ENCODE measurements at regions of chr1 and their contacts with region 1.

Region 1: GRCh38 chr1:27010989-27011764 is 1.5 kb downstream of the TENT5B start:
- DNase-seq: peak; percentile 87 to 92
- H3K4me3 ChIP-seq: no peak overlapping the region
- H3K27ac ChIP-seq: peak overlapping the region; percentile 79
- H3K4me1 ChIP-seq: peaks cover 53% of the 10 kb centered on the region
- H3K27me3 ChIP-seq: no peaks in the 10 kb centered on the region
- CTCF ChIP-seq: no peak

Region 2: GRCh38 chr1:26838474-26839338 is 172.5 kb before region 1 on chr1:
- CTCF ChIA-PET with region 1: no interaction called
- POLR2A ChIA-PET with region 1: no interaction called
- intact Hi-C with region 1: no loop called
- DNase-seq: no peak
- H3K4me3 ChIP-seq: no peak overlapping the region
- H3K27ac ChIP-seq: no peak overlapping the region
- H3K4me1 ChIP-seq: no peaks in the 10 kb centered on the region
- H3K27me3 ChIP-seq: no peaks in the 10 kb centered on the region
- CTCF ChIP-seq: no peak

Region 3: DNA sequence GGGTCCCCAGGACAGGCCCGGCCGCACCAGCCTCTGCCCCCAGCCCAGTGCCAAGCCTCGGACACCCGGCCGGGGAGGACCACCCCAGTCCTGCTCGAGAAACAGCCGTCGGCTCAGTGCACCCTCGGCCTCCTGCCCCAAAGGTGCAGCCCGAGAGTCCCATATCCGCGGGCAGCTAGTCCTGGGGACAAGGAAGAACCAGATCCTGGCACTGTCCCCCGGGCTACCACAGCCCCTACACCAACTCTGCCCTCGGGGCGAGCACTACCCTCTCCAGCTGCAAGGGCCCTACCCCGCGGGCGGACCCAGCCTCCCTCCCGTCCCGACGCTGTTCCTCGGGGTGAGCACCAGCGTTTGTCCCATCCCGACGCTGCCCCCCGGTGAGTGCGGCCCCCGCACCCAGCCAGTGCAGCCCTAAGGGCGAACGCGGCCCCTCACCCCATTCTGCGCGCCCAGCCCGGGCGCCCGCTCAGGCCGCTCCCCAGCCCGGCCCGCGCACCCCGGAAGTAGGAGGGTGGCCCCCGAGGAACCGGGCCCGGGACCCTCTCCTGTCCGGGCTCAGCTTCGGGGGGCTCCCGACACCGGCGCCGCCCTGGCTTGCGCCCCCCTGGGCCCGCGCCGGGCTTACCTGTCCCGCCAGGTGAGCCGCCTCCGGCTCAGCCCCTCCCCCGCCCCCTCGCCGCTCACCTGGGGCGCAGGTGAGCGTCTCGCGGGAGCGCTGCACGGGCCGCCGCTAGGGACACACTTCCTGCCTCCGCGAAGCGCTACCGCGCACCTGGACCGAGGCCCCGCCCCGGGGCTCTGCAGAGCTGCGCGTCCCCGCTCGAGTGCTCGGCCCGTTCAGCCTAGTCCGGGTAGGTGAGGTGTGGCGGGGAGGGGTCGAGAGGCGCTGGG is 51.2 kb before region 1 on chr1 and contains the start of gene KDF1:
- CTCF ChIA-PET with region 1: no interaction called
- POLR2A ChIA-PET with region 1: interaction called, 31 read pairs
- intact Hi-C with region 1: no loop called
- DNase-seq: peak; percentile 68 to 88
- H3K4me3 ChIP-seq: peak within 1 kb of the TSS; percentile 81
- H3K27ac ChIP-seq: peak within 1 kb of the TSS; percentile 23; the same call in 1 of the 2 replicates
- H3K4me1 ChIP-seq: peaks cover 19% of the 10 kb centered on the region
- H3K27me3 ChIP-seq: no peaks in the 10 kb centered on the region
- CTCF ChIP-seq: no peak; the same call in 1 of the 2 replicates
- total RNA-seq, gene KDF1: 20.5 and 21.3 TPM in 2 replicates

Region 4: DNA sequence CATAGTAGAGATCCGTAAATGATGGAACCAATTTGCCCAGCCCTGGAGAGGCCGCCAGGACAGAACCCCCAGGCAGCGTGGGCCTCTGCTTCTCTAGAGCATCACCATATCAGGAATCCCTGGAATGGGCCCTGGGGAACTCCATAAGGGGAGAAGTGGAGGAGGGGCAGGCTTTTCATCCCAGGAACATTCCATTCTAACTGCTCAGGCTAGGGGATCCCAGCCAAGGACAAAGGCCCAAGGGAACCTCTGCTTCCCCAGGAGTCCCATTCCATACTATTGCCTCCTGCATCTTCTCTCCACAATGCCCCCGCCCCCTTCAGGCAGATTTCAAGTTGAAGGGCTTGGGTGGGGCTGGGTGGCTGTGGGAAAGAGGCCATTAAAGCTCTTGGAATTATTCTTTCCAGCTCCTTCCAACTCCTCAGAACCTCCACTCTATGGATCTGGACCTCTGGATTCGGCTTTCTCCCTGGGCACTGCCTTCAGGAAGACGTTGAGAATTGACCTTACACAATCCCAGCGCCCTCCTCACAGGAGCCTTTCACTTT is 11.7 kb before region 1 on chr1:
- CTCF ChIA-PET with region 1: interaction called, 6 read pairs
- POLR2A ChIA-PET with region 1: interaction called, 3 read pairs
- intact Hi-C with region 1: loop called (anchors 1 kb)
- DNase-seq: peak; percentile 70 to 81
- H3K4me3 ChIP-seq: no peak overlapping the region
- H3K27ac ChIP-seq: peak overlapping the region; percentile 62
- H3K4me1 ChIP-seq: peaks cover 40% of the 10 kb centered on the region
- H3K27me3 ChIP-seq: no peaks in the 10 kb centered on the region
- CTCF ChIP-seq: no peak

Region 5: GRCh38 chr1:27031235-27032118 is 20.3 kb after region 1 on chr1:
- CTCF ChIA-PET with region 1: interaction called, 9 read pairs
- POLR2A ChIA-PET with region 1: interaction called, 12 read pairs
- intact Hi-C with region 1: loop called (anchors 1 kb)
- DNase-seq: peak; percentile 76 to 93
- H3K4me3 ChIP-seq: peak overlapping the region; percentile 59; the same call in 1 of the 2 replicates
- H3K27ac ChIP-seq: peak overlapping the region; percentile 81
- H3K4me1 ChIP-seq: peaks cover 5% of the 10 kb centered on the region; the same call in 1 of the 2 replicates
- H3K27me3 ChIP-seq: no peaks in the 10 kb centered on the region
- CTCF ChIP-seq: no peak

Region 6: DNA sequence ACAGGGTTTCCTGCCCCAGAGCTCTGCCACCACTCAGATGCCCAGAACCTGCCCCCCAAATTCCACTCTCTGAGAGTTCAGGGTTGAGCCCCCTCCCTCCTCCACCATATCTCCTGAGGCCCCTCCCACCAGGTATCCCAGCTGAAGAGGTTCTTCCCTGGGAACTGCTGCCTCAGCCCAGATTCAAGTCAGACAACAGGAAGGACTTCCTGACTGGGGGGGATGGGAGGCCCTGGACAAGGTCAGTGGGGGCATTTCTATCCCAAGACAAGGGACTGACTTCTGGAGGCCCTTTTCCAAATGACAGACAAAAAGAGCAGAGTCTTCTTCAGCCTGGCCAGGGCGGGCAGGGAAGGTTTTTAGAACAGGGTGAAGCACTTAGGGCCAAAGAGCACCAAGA is 25.5 kb after region 1 on chr1:
- CTCF ChIA-PET with region 1: interaction called, 5 read pairs
- POLR2A ChIA-PET with region 1: interaction called, 12 read pairs
- intact Hi-C with region 1: loop called (anchors 1 kb)
- DNase-seq: no peak
- H3K4me3 ChIP-seq: no peak overlapping the region
- H3K27ac ChIP-seq: no peak overlapping the region
- H3K4me1 ChIP-seq: peaks cover 5% of the 10 kb centered on the region; the same call in 1 of the 2 replicates
- H3K27me3 ChIP-seq: no peaks in the 10 kb centered on the region
- CTCF ChIP-seq: no peak

Region 7: GRCh38 chr1:27346991-27347627 is 335.9 kb after region 1 on chr1:
- CTCF ChIA-PET with region 1: interaction called, 11 read pairs
- POLR2A ChIA-PET with region 1: no interaction called
- intact Hi-C with region 1: no loop called
- DNase-seq: peak in 1 of 2 experiments; percentile 19
- H3K4me3 ChIP-seq: no peak overlapping the region
- H3K27ac ChIP-seq: no peak overlapping the region
- H3K4me1 ChIP-seq: peaks cover 11% of the 10 kb centered on the region
- H3K27me3 ChIP-seq: no peaks in the 10 kb centered on the region
- CTCF ChIP-seq: no peak

Measured in PC-9 (cell line).